ENCODE measurements at regions of chr6 and their contacts with region 1.

Region 1: GRCh38 chr6:52233975-52234823 is 10.1 kb downstream of the IL17F start:
- DNase-seq: peak; percentile 62
- ATAC-seq: peak; percentile 71
- H3K4me3 Mint-ChIP-seq: no peak overlapping the region
- H3K27ac Mint-ChIP-seq: no peak overlapping the region
- H3K4me1 Mint-ChIP-seq: peaks cover 13% of the 10 kb centered on the region
- H3K27me3 Mint-ChIP-seq: peaks cover 44% of the 10 kb centered on the region
- CTCF ChIP-seq: peak; percentile 27

Region 2: GRCh38 chr6:52087498-52087999 is 146.7 kb before region 1 on chr6 and contains the start of gene PKHD1:
- CTCF ChIA-PET with region 1: no interaction called
- POLR2A ChIA-PET with region 1: no interaction called
- intact Hi-C with region 1: loop called (anchors 5 kb)
- DNase-seq: no peak
- ATAC-seq: peak; percentile 70
- H3K4me3 Mint-ChIP-seq: no peak within 1 kb of the TSS
- H3K27ac Mint-ChIP-seq: no peak within 1 kb of the TSS
- H3K4me1 Mint-ChIP-seq: no peaks in the 10 kb centered on the region
- H3K27me3 Mint-ChIP-seq: peaks cover 6% of the 10 kb centered on the region
- CTCF ChIP-seq: no peak
- total RNA-seq, gene PKHD1: not detected

Region 3: GRCh38 chr6:52305948-52306767 is 72.0 kb after region 1 on chr6:
- CTCF ChIA-PET with region 1: no interaction called
- POLR2A ChIA-PET with region 1: no interaction called
- intact Hi-C with region 1: no loop called
- DNase-seq: no peak
- ATAC-seq: peak; percentile 47
- H3K4me3 Mint-ChIP-seq: peak overlapping the region; percentile 30
- H3K27ac Mint-ChIP-seq: peak overlapping the region; percentile 92
- H3K4me1 Mint-ChIP-seq: peaks cover 65% of the 10 kb centered on the region
- H3K27me3 Mint-ChIP-seq: no peaks in the 10 kb centered on the region
- CTCF ChIP-seq: no peak

Region 4: DNA sequence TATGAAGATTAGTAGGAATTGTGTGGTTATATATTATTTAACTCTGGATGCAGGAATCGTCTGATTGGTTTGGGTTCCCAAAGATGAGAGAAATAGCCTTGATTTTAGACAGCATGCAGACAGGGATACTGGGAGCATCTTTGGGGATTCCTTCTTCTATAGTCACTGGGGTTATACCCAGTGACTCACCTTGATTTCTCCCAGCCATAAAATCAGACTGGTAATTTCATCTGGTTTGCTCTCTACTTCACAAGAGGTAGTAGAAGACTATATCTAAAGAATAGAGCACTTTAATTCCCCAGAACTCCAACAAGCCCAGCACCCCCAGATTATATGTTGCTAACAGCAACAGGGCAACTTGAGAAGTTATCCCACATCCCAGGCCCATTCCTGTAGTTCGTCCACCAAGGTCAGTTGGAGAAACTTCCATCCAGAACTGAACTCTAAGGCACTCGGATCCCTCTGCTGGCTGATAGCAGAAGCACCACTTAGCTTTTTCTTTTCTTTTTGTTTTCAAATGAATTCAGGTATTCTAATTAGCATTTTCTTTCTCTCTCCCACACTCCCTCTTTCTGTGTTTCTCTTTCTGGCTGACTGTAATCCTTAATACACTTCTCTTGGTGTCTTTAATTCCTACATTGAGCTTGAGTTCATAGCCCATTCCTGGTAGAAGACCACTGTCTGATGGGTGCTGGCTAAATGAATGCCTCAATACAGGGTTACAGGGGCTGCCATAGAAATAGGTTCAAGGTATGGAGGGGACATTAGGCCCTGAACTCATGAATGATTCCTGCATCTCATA is 165.5 kb after region 1 on chr6:
- CTCF ChIA-PET with region 1: no interaction called
- POLR2A ChIA-PET with region 1: no interaction called
- intact Hi-C with region 1: no loop called
- DNase-seq: peak; percentile 57
- ATAC-seq: peak; percentile 51
- H3K4me3 Mint-ChIP-seq: no peak overlapping the region
- H3K27ac Mint-ChIP-seq: peak overlapping the region; percentile 78
- H3K4me1 Mint-ChIP-seq: peaks cover 65% of the 10 kb centered on the region
- H3K27me3 Mint-ChIP-seq: no peaks in the 10 kb centered on the region
- CTCF ChIP-seq: peak; percentile 91

Measured in activated CD8-positive, alpha-beta T cell treated with anti-CD3 and anti-CD28 coated beads for 36 hours (primary cell).